ENCODE measurements at regions of chr10 and their contacts with region 1.

Region 1: DNA sequence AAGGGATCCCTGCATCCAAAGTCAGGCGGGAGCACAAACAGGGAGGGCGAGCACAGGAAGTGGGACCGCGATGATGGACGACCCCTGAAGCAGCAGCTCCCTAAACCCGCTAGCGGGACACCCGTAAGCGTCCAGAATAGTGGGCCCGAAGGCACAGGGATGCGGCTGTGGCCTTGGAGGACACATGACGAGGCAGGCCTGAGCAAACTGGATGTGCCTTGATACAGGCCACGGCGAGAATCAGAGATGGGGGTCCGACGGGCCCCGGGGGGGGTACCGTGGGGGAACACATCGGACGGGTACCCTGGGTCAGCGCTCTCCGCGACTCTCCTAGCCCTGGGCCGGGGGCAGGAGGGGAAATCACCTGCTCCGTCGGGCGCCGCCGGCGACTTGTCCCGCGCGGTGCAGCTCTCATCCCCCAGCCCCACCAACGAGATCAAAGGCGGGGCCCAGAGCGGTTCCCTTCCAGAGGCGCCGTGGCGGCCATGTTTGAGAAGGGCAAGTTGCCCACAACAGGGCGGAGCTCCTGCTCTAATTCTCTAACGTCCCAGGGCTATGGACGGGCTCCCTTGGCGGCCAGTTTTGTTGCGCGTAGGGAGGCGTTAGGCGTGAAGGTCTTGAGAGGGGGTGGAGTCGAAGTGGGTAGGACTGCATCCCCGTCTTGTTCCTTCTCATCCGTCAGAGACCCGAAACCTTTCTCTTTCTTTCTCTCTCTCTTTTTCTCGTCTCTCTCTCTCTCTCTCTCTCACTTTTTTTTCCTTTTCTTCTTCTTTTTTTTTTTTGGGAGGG is at the start of gene CUEDC2:
- DNase-seq: peak; percentile 90 to 97 (median 96)
- ATAC-seq: peak; percentile 93
- H3K4me3 ChIP-seq: peak within 1 kb of the TSS; percentile 72
- H3K4me3 Mint-ChIP-seq: peak within 1 kb of the TSS; percentile 95
- H3K27ac ChIP-seq: peak within 1 kb of the TSS; percentile 23 to 37
- H3K27ac Mint-ChIP-seq: peak within 1 kb of the TSS; percentile 92
- H3K4me1 ChIP-seq: peaks cover 57% of the 10 kb centered on the region
- H3K4me1 Mint-ChIP-seq: peaks cover 56% of the 10 kb centered on the region
- H3K27me3 ChIP-seq: no peaks in the 10 kb centered on the region
- H3K27me3 Mint-ChIP-seq: no peaks in the 10 kb centered on the region
- CTCF ChIP-seq: no peak
- total RNA-seq, gene CUEDC2: 25.5 to 25.6 TPM

Region 2: DNA sequence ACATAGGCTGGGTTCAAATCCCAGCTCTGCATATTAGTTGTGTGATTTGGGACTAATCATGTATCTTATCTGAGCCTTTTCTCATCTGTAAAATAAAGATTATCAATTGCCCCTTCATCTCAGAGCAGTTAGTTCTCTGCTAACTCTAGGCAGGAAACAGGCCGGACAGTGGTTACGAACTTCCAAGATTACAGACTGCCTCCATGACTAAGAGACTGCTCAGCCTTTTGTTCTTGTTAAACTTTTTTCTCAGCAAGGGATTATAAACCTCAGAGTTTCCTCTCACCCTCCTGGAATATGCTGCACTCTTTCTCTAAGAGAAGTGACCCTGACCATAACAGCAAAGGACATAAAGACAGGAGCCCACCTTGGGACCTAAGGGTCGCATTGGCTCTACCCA is 89.4 kb before region 1 on chr10:
- CTCF ChIA-PET with region 1: no interaction called
- POLR2A ChIA-PET with region 1: no interaction called
- intact Hi-C with region 1: no loop called
- DNase-seq: no peak
- ATAC-seq: no peak
- H3K4me3 ChIP-seq: no peak overlapping the region
- H3K4me3 Mint-ChIP-seq: no peak overlapping the region
- H3K27ac ChIP-seq: no peak overlapping the region
- H3K27ac Mint-ChIP-seq: no peak overlapping the region
- H3K4me1 ChIP-seq: no peaks in the 10 kb centered on the region
- H3K4me1 Mint-ChIP-seq: peaks cover 6% of the 10 kb centered on the region
- H3K27me3 ChIP-seq: no peaks in the 10 kb centered on the region
- H3K27me3 Mint-ChIP-seq: no peaks in the 10 kb centered on the region
- CTCF ChIP-seq: no peak

Region 3: DNA sequence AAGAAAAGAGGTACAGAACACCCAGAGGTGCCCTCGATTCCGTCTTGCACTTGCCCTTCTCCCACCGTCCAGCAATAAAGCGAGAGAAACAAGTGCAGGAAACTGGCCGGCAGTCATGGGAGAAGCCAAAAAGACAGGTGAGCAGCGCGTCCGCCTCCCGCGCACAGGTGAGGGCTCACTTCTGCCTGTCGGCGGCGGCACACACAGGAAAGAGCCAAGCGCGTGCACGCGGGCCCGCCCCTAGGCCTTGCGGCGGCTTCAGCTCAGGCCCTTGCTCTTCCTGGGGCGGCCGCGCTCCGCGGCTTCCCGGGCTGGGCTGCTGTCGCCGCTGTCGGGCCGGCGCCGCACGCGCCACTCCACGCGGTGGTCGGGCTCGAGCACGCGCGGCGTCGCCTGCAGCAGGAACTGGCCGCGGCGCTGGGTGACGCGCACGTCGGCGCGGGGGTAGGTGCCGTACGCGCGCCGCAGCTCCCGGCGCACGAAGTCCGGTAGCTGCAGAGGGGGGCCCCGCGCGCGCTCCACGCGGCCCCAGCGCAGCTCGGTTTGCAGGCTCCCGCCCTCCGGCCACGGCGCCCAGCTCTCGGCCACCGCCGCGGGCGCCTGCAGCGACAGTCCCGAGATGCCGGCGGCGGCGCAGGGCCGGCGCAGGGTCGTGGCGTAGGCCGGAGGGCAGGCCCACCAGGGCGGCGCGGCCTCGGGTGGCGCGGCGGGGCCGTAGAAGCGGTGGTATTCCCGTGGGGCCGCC is 18.0 kb after region 1 on chr10:
- CTCF ChIA-PET with region 1: interaction called, 3 read pairs
- POLR2A ChIA-PET with region 1: interaction called, 131 read pairs
- intact Hi-C with region 1: loop called (anchors 1 to 2 kb)
- DNase-seq: peak; percentile 78 to 98 (median 88)
- ATAC-seq: peak; percentile 77
- H3K4me3 ChIP-seq: peak overlapping the region; percentile 83
- H3K4me3 Mint-ChIP-seq: peak overlapping the region; percentile 94
- H3K27ac ChIP-seq: peak overlapping the region; percentile 79 to 80
- H3K27ac Mint-ChIP-seq: peak overlapping the region; percentile 78
- H3K4me1 ChIP-seq: peaks cover 41% of the 10 kb centered on the region
- H3K4me1 Mint-ChIP-seq: peaks cover 21% of the 10 kb centered on the region
- H3K27me3 ChIP-seq: no peaks in the 10 kb centered on the region
- H3K27me3 Mint-ChIP-seq: no peaks in the 10 kb centered on the region
- CTCF ChIP-seq: no peak

Region 4: GRCh38 chr10:102461187-102462054 is 29.1 kb after region 1 on chr10:
- CTCF ChIA-PET with region 1: interaction called, 3 read pairs
- POLR2A ChIA-PET with region 1: interaction called, 17 read pairs
- intact Hi-C with region 1: loop called in 1 of 2 experiments (anchors 1 kb)
- DNase-seq: peak; percentile 87 to 97 (median 93)
- ATAC-seq: peak; percentile 100
- H3K4me3 ChIP-seq: peak overlapping the region; percentile 72
- H3K4me3 Mint-ChIP-seq: peak overlapping the region; percentile 92
- H3K27ac ChIP-seq: peak overlapping the region in 1 of 2 donors; percentile 38
- H3K27ac Mint-ChIP-seq: peak overlapping the region; percentile 70
- H3K4me1 ChIP-seq: peaks cover 28% of the 10 kb centered on the region
- H3K4me1 Mint-ChIP-seq: peaks cover 29% of the 10 kb centered on the region
- H3K27me3 ChIP-seq: no peaks in the 10 kb centered on the region
- H3K27me3 Mint-ChIP-seq: no peaks in the 10 kb centered on the region
- CTCF ChIP-seq: no peak

Region 5: DNA sequence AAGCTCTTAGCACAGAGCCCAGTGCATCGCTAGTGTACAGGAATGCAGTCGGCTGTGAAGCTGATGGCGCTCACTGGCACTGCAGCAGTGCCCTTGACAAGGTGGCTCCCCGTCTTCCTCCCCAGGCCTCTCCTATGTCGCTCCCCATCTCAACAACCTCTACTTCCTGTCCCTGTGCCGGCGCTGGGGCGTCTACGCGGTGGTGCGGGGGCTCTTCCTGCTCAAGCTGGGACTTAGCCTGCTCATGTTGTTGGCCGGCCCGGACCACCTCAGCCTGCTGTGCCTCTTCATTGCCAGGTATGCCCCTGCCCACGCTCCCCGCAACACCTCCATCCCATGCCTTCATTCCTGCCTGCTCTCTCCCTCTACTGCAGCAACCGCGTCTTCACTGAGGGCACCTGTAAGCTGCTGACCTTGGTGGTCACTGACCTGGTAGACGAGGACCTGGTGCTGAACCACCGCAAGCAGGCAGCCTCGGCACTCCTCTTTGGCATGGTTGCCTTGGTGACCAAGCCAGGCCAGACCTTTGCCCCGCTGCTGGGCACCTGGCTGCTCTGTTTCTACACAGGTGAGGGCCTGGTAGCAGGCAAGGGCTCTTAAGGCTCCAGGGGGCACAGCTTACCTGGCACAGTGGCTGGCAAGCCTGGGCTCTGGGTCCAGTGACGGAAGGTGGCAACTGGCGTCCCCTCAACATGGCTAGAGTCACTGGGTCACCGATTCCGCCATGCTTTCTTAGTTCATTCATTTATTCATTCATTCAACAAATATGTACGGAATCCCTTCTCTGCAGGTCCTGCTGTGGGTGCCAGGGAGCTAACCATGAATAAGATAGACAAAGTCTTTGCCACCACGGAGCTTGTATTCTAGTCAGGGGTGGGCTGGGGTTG is 41.3 kb after region 1 on chr10:
- CTCF ChIA-PET with region 1: interaction called, 3 read pairs
- POLR2A ChIA-PET with region 1: interaction called, 3 read pairs
- intact Hi-C with region 1: loop called in 1 of 2 experiments (anchors 1 kb)
- DNase-seq: peak in 9 of 14 experiments; percentile 10 to 56 (median 46)
- ATAC-seq: peak; percentile 80
- H3K4me3 ChIP-seq: no peak overlapping the region
- H3K4me3 Mint-ChIP-seq: peak overlapping the region; percentile 22
- H3K27ac ChIP-seq: peak overlapping the region in 1 of 2 donors; percentile 17
- H3K27ac Mint-ChIP-seq: peak overlapping the region; percentile 81
- H3K4me1 ChIP-seq: peaks cover 25% of the 10 kb centered on the region
- H3K4me1 Mint-ChIP-seq: peaks cover 24% of the 10 kb centered on the region
- H3K27me3 ChIP-seq: no peaks in the 10 kb centered on the region
- H3K27me3 Mint-ChIP-seq: no peaks in the 10 kb centered on the region
- CTCF ChIP-seq: no peak